PC-3 (cell line): ENCODE measurements at regions of chr7 and their contacts with region 1.

Region 1: GRCh38 chr7:151796091-151796870 is 80.6 kb downstream of the PRKAG2 start:
- DNase-seq: peak; percentile 90
- ATAC-seq: peak; percentile 95
- H3K4me3 ChIP-seq: peak overlapping the region; percentile 4; the same call in 1 of the 2 replicates
- H3K27ac ChIP-seq: peak overlapping the region; percentile 86
- H3K4me1 ChIP-seq: peaks cover 42% of the 10 kb centered on the region
- H3K27me3 ChIP-seq: no peaks in the 10 kb centered on the region
- CTCF ChIP-seq: no peak

Region 2: DNA sequence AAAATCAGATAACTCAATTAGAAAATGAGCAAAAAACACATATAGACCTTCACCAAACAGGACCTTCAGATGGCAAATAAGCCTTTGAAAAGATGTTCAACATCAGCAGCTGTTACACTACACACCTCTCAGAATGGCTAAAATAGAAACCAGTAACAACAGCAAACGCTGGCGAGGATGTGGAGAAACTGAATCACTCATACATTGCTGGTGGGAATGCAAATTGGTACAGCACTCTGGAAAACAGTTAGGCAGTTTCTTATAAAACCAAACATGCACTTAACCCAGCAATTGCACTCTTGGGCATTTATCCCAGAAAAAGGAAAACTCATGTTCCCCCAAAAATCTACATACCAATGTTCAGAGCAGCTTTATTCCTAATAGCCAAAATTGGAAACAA is 510.1 kb before region 1 on chr7:
- CTCF ChIA-PET with region 1: interaction called, 19 read pairs
- POLR2A ChIA-PET with region 1: no interaction called
- intact Hi-C with region 1: no loop called
- DNase-seq: no peak
- ATAC-seq: no peak
- H3K4me3 ChIP-seq: no peak overlapping the region
- H3K27ac ChIP-seq: no peak overlapping the region
- H3K4me1 ChIP-seq: no peaks in the 10 kb centered on the region
- H3K27me3 ChIP-seq: peaks cover 26% of the 10 kb centered on the region
- CTCF ChIP-seq: no peak

Region 3: GRCh38 chr7:151775547-151776443 is 20.5 kb before region 1 on chr7:
- CTCF ChIA-PET with region 1: no interaction called
- POLR2A ChIA-PET with region 1: no interaction called
- intact Hi-C with region 1: no loop called
- DNase-seq: no peak
- ATAC-seq: no peak
- H3K4me3 ChIP-seq: no peak overlapping the region
- H3K27ac ChIP-seq: no peak overlapping the region
- H3K4me1 ChIP-seq: no peaks in the 10 kb centered on the region
- H3K27me3 ChIP-seq: no peaks in the 10 kb centered on the region
- CTCF ChIP-seq: no peak

Region 4: GRCh38 chr7:151844071-151844824 is 48.0 kb after region 1 on chr7:
- CTCF ChIA-PET with region 1: no interaction called
- POLR2A ChIA-PET with region 1: no interaction called
- intact Hi-C with region 1: loop called (anchors 1 kb)
- DNase-seq: peak; percentile 88
- ATAC-seq: peak; percentile 97
- H3K4me3 ChIP-seq: peak overlapping the region; percentile 26; the same call in 1 of the 2 replicates
- H3K27ac ChIP-seq: peak overlapping the region; percentile 73
- H3K4me1 ChIP-seq: peaks cover 13% of the 10 kb centered on the region
- H3K27me3 ChIP-seq: no peaks in the 10 kb centered on the region
- CTCF ChIP-seq: no peak

Region 5: DNA sequence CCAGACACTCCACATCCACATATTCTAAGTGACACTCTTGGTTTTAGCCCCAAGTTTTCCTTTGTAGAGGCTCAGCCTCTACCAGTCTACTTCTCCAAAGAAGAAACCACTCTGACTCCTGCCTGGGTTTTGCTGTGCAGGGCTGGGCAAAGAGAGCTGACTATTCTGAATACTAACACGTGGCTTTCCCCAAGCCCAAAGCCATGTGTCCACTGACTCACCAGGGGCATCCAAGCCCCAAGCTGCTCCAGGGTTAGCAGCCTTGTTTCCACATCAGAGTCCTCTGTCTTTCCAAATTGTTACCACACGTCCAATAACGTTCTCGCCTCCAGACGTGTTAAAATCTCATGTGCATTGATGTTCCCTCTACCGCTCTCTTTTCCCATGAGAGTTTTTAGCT is 168.7 kb after region 1 on chr7:
- CTCF ChIA-PET with region 1: no interaction called
- POLR2A ChIA-PET with region 1: no interaction called
- intact Hi-C with region 1: no loop called
- DNase-seq: no peak
- ATAC-seq: no peak
- H3K4me3 ChIP-seq: no peak overlapping the region
- H3K27ac ChIP-seq: no peak overlapping the region
- H3K4me1 ChIP-seq: no peaks in the 10 kb centered on the region
- H3K27me3 ChIP-seq: no peaks in the 10 kb centered on the region
- CTCF ChIP-seq: no peak